Endothelial cell of umbilical vein (primary cell): ENCODE measurements at regions of chr14 and their contacts with region 1.

Region 1: GRCh38 chr14:60656686-60657455 is 7.6 kb upstream of the SIX1 start:
- DNase-seq: peak; percentile 65
- H3K4me3 ChIP-seq: peak overlapping the region; percentile 22 to 64 (median 59)
- H3K27ac ChIP-seq: peak overlapping the region; percentile 3
- H3K4me1 ChIP-seq: peaks cover 10% of the 10 kb centered on the region
- H3K27me3 ChIP-seq: peaks cover 35 to 44% of the 10 kb centered on the region in 2 experiments
- CTCF ChIP-seq: peak; percentile 39 to 59
- POLR2A ChIP-seq: no peak

Region 2: GRCh38 chr14:60642270-60643140 is 14.4 kb before region 1 on chr14:
- CTCF ChIA-PET with region 1: interaction called, 24 read pairs
- POLR2A ChIA-PET with region 1: no interaction called
- dilution Hi-C with region 1: no loop called
- intact Hi-C with region 1: no loop called
- DNase-seq: no peak
- H3K4me3 ChIP-seq: no peak overlapping the region
- H3K27ac ChIP-seq: no peak overlapping the region
- H3K4me1 ChIP-seq: peaks cover 18% of the 10 kb centered on the region
- H3K27me3 ChIP-seq: peaks cover 77 to 98% of the 10 kb centered on the region in 2 experiments
- CTCF ChIP-seq: no peak
- POLR2A ChIP-seq: no peak

Region 3: GRCh38 chr14:61188978-61189808 is 532.3 kb after region 1 on chr14:
- CTCF ChIA-PET with region 1: interaction called, 9 read pairs
- POLR2A ChIA-PET with region 1: no interaction called
- dilution Hi-C with region 1: no loop called
- intact Hi-C with region 1: loop called (anchors 2 kb)
- DNase-seq: peak; percentile 70
- H3K4me3 ChIP-seq: peak overlapping the region; percentile 9 to 50 (median 32)
- H3K27ac ChIP-seq: peak overlapping the region; percentile 44
- H3K4me1 ChIP-seq: peaks cover 44% of the 10 kb centered on the region
- H3K27me3 ChIP-seq: no peaks in the 10 kb centered on the region
- CTCF ChIP-seq: peak; percentile 70 to 85
- POLR2A ChIP-seq: no peak